ENCODE measurements at regions of chr16 and their contacts with region 1.

Region 1: DNA sequence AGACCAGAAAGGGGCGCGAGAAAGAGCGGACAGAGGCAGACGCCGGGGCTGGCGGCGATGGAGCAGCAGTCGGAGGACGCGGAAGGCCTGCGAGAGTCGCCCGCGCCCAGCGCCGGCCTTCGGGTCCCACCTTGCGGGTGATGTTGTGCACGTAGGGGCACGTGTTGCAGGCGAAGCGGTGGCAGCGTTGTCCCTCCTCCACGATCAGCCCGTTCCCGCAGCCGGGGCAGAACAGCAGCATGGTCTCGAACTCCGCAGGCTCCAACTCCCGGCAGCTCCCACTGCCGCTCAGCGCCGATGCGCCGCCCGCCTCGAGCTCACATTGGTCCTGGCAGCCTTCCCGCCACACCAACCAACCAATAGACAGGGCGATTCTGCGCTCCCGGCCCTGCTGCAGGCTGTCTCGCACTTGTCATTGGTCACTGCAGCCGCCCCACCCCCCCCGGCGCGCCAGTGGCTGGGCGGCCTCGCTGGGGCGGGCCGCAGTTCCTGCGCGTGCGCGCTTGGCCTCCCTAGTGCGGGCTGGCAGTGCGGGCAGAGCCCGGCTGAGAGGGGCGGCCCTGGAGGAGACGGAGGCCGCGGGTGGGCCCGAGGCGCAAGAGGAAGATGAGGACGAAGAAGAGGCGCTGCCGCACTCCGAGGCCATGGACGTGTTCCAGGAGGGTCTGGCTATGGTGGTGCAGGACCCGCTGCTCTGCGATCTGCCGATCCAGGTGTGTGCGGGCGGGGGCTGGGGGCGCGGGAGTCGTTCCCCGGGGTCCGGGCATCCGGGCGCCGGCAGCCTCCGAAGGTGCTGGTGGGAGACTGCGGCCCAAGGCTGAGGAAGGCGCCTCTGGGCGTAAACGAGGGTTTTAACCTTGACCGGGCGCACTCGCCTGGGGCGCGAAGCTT is at the starts of genes POLR3K and SNRNP25:
- DNase-seq: peak; percentile 97 to 98
- H3K4me3 ChIP-seq: peak within 1 kb of the TSS; percentile 60
- H3K4me3 Mint-ChIP-seq: peak within 1 kb of the TSS; percentile 99
- H3K27ac Mint-ChIP-seq: peak within 1 kb of the TSS; percentile 90
- H3K4me1 ChIP-seq: no peaks in the 10 kb centered on the region
- H3K4me1 Mint-ChIP-seq: no peaks in the 10 kb centered on the region
- H3K27me3 ChIP-seq: no peaks in the 10 kb centered on the region
- H3K27me3 Mint-ChIP-seq: no peaks in the 10 kb centered on the region
- CTCF ChIP-seq: no peak
- total RNA-seq, gene POLR3K: 29.3 and 32.4 TPM in 2 replicates
- total RNA-seq, gene SNRNP25: 57.1 and 60.7 TPM in 2 replicates

Region 2: DNA sequence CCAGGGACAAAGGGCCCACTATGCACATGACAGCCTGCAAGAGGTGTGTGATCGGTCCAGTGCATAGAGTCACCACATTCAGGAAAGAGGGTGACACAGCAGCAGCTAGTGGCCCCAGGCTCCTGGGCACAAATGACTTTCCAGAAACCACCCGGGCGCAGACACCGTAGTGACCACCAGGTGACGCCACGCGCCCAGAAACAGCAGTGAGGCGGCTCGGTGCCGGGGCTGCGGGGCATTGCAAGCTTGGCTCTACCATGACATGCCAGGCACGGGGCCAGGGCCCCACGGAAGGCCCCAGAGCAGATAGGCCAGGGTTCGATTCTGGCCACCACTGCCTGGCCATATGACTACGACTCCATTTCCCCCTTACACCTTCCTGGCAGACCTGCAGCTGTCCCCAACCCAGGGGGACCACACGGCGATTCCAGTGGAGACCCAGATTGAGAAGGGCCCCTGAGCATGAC is 12.1 kb after region 1 on chr16:
- CTCF ChIA-PET with region 1: interaction called, 16 read pairs
- POLR2A ChIA-PET with region 1: interaction called, 5 read pairs
- intact Hi-C with region 1: no loop called
- DNase-seq: peak; percentile 67 to 83
- H3K4me3 ChIP-seq: no peak overlapping the region
- H3K4me3 Mint-ChIP-seq: no peak overlapping the region
- H3K27ac Mint-ChIP-seq: no peak overlapping the region
- H3K4me1 ChIP-seq: peaks cover 6% of the 10 kb centered on the region
- H3K4me1 Mint-ChIP-seq: no peaks in the 10 kb centered on the region
- H3K27me3 ChIP-seq: no peaks in the 10 kb centered on the region
- H3K27me3 Mint-ChIP-seq: no peaks in the 10 kb centered on the region
- CTCF ChIP-seq: peak; percentile 91 to 95

Region 3: DNA sequence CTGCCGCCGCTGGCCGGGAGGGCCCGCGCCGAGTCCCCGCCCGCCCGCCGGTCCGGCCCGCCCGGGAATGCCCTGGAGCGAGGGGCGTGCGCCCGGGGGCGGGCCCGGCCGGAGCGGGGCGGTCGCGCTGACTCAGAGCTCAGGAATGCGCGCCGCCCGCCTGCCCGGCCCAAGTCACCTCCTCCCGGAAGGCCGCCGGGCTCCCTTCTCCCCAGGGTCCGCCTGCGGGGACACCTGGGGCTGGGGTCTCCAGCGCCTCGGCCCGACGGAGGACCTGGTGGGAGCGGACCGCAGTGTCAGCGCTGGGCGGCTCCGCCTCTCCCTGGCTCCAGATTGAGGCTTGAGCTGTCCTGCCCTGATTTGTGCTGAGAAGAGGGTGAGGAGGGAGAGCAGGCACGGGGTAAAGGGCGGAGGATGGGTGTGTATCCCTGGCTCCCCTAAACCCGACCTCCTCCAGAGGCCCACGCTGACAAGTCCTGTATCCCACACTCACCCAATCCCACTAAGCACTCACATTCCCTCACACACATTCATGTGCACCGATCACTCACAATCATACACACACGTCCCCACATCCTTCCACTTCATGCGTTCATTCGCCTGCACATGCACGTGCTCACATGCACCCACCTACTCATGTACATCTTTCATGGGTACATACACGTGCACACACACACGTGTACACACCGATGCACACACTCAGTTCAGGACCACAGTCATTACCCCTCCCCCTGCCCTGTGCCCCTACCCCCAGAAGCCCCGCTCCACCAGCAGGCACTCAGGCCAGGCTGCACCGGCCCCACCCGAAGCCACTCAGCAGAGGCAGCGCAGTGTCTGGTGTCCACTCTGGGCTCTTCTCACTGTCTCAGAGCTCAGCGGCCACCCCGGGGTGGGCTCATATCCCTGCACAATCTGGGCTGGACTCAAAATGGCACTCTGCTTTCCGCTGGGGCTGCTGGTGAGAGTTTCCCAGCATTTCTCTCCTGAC is 19.3 kb after region 1 on chr16 and contains the start of gene RHBDF1:
- CTCF ChIA-PET with region 1: interaction called, 3 read pairs
- POLR2A ChIA-PET with region 1: interaction called, 14 read pairs
- intact Hi-C with region 1: no loop called
- DNase-seq: peak; percentile 61 to 80
- H3K4me3 ChIP-seq: peak within 1 kb of the TSS; percentile 58
- H3K4me3 Mint-ChIP-seq: peak within 1 kb of the TSS; percentile 88
- H3K27ac Mint-ChIP-seq: peak within 1 kb of the TSS; percentile 98
- H3K4me1 ChIP-seq: peaks cover 41% of the 10 kb centered on the region
- H3K4me1 Mint-ChIP-seq: peaks cover 7% of the 10 kb centered on the region
- H3K27me3 ChIP-seq: no peaks in the 10 kb centered on the region
- H3K27me3 Mint-ChIP-seq: no peaks in the 10 kb centered on the region
- CTCF ChIP-seq: no peak
- total RNA-seq, gene RHBDF1: 62.3 and 65.8 TPM in 2 replicates

Region 4: DNA sequence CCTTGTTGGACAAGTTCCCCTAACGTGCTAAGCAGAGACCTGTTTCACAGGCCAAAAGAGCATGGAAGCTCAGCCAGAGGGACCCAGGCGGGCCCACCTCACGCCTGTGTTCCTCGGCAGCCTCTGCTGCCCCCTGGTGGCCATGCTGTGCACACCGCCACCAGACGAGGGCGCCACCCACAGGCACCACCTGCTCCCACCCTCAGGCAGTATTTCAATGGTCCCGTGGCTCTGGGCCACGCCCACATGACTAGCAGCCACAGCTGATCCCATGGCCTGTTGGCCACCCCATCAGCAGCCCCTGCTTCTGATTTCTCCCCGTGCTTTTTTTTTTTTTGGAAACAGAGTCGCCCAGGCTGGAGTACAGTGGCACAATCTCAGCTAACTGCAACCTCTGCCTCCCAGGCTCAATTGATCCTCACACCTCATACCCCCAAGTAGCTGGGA is 43.4 kb after region 1 on chr16:
- CTCF ChIA-PET with region 1: interaction called, 12 read pairs
- POLR2A ChIA-PET with region 1: no interaction called
- intact Hi-C with region 1: no loop called
- DNase-seq: peak; percentile 81 to 91
- H3K4me3 ChIP-seq: no peak overlapping the region
- H3K4me3 Mint-ChIP-seq: no peak overlapping the region
- H3K27ac Mint-ChIP-seq: no peak overlapping the region
- H3K4me1 ChIP-seq: no peaks in the 10 kb centered on the region
- H3K4me1 Mint-ChIP-seq: no peaks in the 10 kb centered on the region
- H3K27me3 ChIP-seq: no peaks in the 10 kb centered on the region
- H3K27me3 Mint-ChIP-seq: no peaks in the 10 kb centered on the region
- CTCF ChIP-seq: peak; percentile 94 to 100

Region 5: DNA sequence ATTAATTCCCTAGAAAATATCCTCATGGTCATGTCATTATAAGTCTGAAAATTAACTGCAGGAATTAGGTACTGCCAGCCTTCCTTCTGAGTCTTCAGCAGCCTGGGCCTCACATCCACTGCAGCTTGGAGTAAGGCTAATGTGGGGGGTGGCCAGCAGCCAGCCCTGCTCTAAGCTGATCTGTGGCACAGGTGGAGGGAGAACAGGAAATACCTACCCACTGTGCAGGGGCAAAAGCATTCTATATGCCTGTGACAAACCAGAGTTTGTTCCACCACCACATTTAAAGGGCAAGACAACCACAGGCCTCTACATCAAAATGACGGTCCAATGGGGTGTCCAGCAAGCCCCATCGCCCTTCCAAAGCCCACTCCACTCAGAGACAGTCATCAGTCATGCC is 75.5 kb after region 1 on chr16:
- CTCF ChIA-PET with region 1: no interaction called
- POLR2A ChIA-PET with region 1: no interaction called
- intact Hi-C with region 1: no loop called
- DNase-seq: no peak
- H3K4me3 ChIP-seq: no peak overlapping the region
- H3K4me3 Mint-ChIP-seq: no peak overlapping the region
- H3K27ac Mint-ChIP-seq: no peak overlapping the region
- H3K4me1 ChIP-seq: no peaks in the 10 kb centered on the region
- H3K4me1 Mint-ChIP-seq: no peaks in the 10 kb centered on the region
- H3K27me3 ChIP-seq: no peaks in the 10 kb centered on the region
- H3K27me3 Mint-ChIP-seq: no peaks in the 10 kb centered on the region
- CTCF ChIP-seq: no peak

Region 6: GRCh38 chr16:212999-213398 is 159.4 kb after region 1 on chr16:
- CTCF ChIA-PET with region 1: no interaction called
- POLR2A ChIA-PET with region 1: no interaction called
- intact Hi-C with region 1: no loop called
- DNase-seq: no peak
- H3K4me3 ChIP-seq: no peak overlapping the region
- H3K4me3 Mint-ChIP-seq: no peak overlapping the region
- H3K27ac Mint-ChIP-seq: no peak overlapping the region
- H3K4me1 ChIP-seq: no peaks in the 10 kb centered on the region
- H3K4me1 Mint-ChIP-seq: no peaks in the 10 kb centered on the region
- H3K27me3 ChIP-seq: no peaks in the 10 kb centered on the region
- H3K27me3 Mint-ChIP-seq: no peaks in the 10 kb centered on the region
- CTCF ChIP-seq: no peak

Region 7: GRCh38 chr16:252366-253337 is 199.1 kb after region 1 on chr16:
- CTCF ChIA-PET with region 1: no interaction called
- POLR2A ChIA-PET with region 1: no interaction called
- intact Hi-C with region 1: no loop called
- DNase-seq: no peak
- H3K4me3 ChIP-seq: no peak overlapping the region
- H3K4me3 Mint-ChIP-seq: no peak overlapping the region
- H3K27ac Mint-ChIP-seq: peak overlapping the region; percentile 41
- H3K4me1 ChIP-seq: peaks cover 14% of the 10 kb centered on the region
- H3K4me1 Mint-ChIP-seq: peaks cover 14% of the 10 kb centered on the region
- H3K27me3 ChIP-seq: no peaks in the 10 kb centered on the region
- H3K27me3 Mint-ChIP-seq: no peaks in the 10 kb centered on the region
- CTCF ChIP-seq: no peak

Measured in Caco-2 (cell line).